Endothelial cell of umbilical vein (primary cell): ENCODE measurements at regions of chr12 and their contacts with region 1.

Region 1: GRCh38 chr12:85155787-85156186 is 119.6 kb downstream of the LRRIQ1 start:
- DNase-seq: peak; percentile 67
- H3K4me3 ChIP-seq: no peak overlapping the region
- H3K27ac ChIP-seq: no peak overlapping the region
- H3K4me1 ChIP-seq: no peaks in the 10 kb centered on the region
- H3K27me3 ChIP-seq: no peaks in the 10 kb centered on the region
- CTCF ChIP-seq: peak in 1 of 2 donors; percentile 31
- POLR2A ChIP-seq: no peak

Region 2: GRCh38 chr12:85076688-85077430 is 78.9 kb before region 1 on chr12:
- CTCF ChIA-PET with region 1: interaction called, 22 read pairs
- POLR2A ChIA-PET with region 1: no interaction called
- dilution Hi-C with region 1: no loop called
- intact Hi-C with region 1: loop called (anchors 2 kb)
- DNase-seq: peak; percentile 87
- H3K4me3 ChIP-seq: no peak overlapping the region
- H3K27ac ChIP-seq: no peak overlapping the region
- H3K4me1 ChIP-seq: no peaks in the 10 kb centered on the region
- H3K27me3 ChIP-seq: no peaks in the 10 kb centered on the region
- CTCF ChIP-seq: peak; percentile 27 to 33
- POLR2A ChIP-seq: no peak

Region 3: GRCh38 chr12:85280165-85280983 is 124.6 kb after region 1 on chr12 and contains the start of gene ALX1:
- CTCF ChIA-PET with region 1: interaction called, 9 read pairs
- POLR2A ChIA-PET with region 1: no interaction called
- dilution Hi-C with region 1: no loop called
- intact Hi-C with region 1: loop called (anchors 2 kb)
- DNase-seq: peak; percentile 86
- H3K4me3 ChIP-seq: peak within 1 kb of the TSS; percentile 49 to 84 (median 70)
- H3K27ac ChIP-seq: peak within 1 kb of the TSS; percentile 72
- H3K4me1 ChIP-seq: peaks cover 5% of the 10 kb centered on the region
- H3K27me3 ChIP-seq: peaks cover 20 to 28% of the 10 kb centered on the region in 2 experiments
- CTCF ChIP-seq: peak in 1 of 2 donors; percentile 8
- POLR2A ChIP-seq: peak; percentile 71
- total RNA-seq, gene ALX1: 2.2 and 3.4 TPM in 2 replicates

Region 4: GRCh38 chr12:85441740-85442139 is 286.0 kb after region 1 on chr12:
- CTCF ChIA-PET with region 1: interaction called, 31 read pairs
- POLR2A ChIA-PET with region 1: no interaction called
- dilution Hi-C with region 1: loop called (anchors 25 kb)
- intact Hi-C with region 1: loop called (anchors 1 kb)
- DNase-seq: peak; percentile 52
- H3K4me3 ChIP-seq: no peak overlapping the region
- H3K27ac ChIP-seq: no peak overlapping the region
- H3K4me1 ChIP-seq: no peaks in the 10 kb centered on the region
- H3K27me3 ChIP-seq: no peaks in the 10 kb centered on the region
- CTCF ChIP-seq: peak in 1 of 2 donors; percentile 43
- POLR2A ChIP-seq: no peak

Region 5: DNA sequence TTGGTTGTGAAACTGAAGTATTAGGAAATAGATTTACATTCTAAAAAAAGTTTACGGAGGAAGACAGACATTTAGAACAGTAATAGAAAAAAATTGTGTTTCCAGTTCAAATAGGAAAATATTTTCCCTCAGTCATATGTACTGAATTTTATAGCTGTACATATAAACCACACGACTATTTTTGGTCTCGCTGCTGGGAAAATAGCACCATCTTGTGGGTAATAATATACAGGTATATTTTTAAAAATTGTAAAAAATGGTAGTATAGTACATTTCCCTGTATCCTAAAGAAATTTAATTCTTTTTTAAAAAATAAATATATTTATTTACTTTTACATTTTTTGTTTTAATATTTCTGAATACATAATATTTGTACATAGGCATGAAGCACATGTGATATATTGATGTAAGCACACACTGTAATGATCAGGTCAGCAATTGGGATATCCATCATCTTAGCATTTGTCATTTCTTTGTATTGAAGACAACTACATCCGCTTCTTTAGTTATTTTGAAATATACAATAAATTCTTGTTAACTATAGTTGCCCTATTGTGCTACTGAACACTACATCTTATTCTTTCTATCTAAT is 292.9 kb after region 1 on chr12:
- CTCF ChIA-PET with region 1: interaction called, 104 read pairs
- POLR2A ChIA-PET with region 1: no interaction called
- dilution Hi-C with region 1: loop called (anchors 25 kb)
- intact Hi-C with region 1: loop called (anchors 1 kb)
- DNase-seq: peak; percentile 42
- H3K4me3 ChIP-seq: no peak overlapping the region
- H3K27ac ChIP-seq: no peak overlapping the region
- H3K4me1 ChIP-seq: no peaks in the 10 kb centered on the region
- H3K27me3 ChIP-seq: no peaks in the 10 kb centered on the region
- CTCF ChIP-seq: no peak
- POLR2A ChIP-seq: no peak